CD8-positive, alpha-beta memory T cell (primary cell): ENCODE measurements at regions of chr19 and their contacts with region 1.

Region 1: DNA sequence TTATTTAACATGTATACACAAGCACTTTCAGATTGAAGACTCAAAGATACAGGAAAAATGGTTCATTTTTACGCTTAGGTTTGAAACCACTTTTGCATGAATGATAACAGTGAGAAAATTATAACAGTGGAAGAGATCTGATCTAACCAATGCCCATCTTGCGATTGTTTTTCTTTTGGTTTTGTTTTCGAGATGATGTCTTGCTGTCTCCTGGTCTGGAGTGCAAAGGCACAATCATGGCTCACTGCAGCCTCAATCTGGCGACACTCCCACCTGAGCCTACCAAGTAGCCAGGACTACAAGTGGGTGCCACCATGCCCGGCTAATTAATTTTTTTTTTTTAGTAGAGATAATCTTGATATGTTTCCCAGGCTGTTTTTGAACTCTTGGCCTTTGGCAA is 10.2 kb upstream of the EID2 start:
- DNase-seq: no peak
- H3K4me3 ChIP-seq: no peak overlapping the region
- H3K4me3 Mint-ChIP-seq: no peak overlapping the region
- H3K27ac ChIP-seq: no peak overlapping the region
- H3K27ac Mint-ChIP-seq: no peak overlapping the region
- H3K4me1 ChIP-seq: peaks cover 24% of the 10 kb centered on the region
- H3K4me1 Mint-ChIP-seq: peaks cover 0 to 10% (median 6%) of the 10 kb centered on the region in 3 donors
- H3K27me3 ChIP-seq: no peaks in the 10 kb centered on the region
- H3K27me3 Mint-ChIP-seq: peaks cover 2 to 8% of the 10 kb centered on the region in 2 donors

Region 2: GRCh38 chr19:39671738-39672363 is 121.7 kb after region 1 on chr19:
- CTCF ChIA-PET with region 1: interaction called, 37 read pairs
- POLR2A ChIA-PET with region 1: interaction called, 4 read pairs
- DNase-seq: peak in 4 of 5 donors; percentile 20 to 57 (median 44)
- H3K4me3 ChIP-seq: no peak overlapping the region
- H3K4me3 Mint-ChIP-seq: no peak overlapping the region
- H3K27ac ChIP-seq: no peak overlapping the region
- H3K27ac Mint-ChIP-seq: no peak overlapping the region
- H3K4me1 ChIP-seq: peaks cover 21% of the 10 kb centered on the region
- H3K4me1 Mint-ChIP-seq: peaks cover 0 to 18% (median 11%) of the 10 kb centered on the region in 3 donors
- H3K27me3 ChIP-seq: no peaks in the 10 kb centered on the region
- H3K27me3 Mint-ChIP-seq: peaks cover 17 to 19% of the 10 kb centered on the region in 2 donors